Activated B cell treated with CpG ODN at 0.5 μM for 24 hours (primary cell): ENCODE measurements at regions of chr5 and their contacts with region 1.

Region 1: DNA sequence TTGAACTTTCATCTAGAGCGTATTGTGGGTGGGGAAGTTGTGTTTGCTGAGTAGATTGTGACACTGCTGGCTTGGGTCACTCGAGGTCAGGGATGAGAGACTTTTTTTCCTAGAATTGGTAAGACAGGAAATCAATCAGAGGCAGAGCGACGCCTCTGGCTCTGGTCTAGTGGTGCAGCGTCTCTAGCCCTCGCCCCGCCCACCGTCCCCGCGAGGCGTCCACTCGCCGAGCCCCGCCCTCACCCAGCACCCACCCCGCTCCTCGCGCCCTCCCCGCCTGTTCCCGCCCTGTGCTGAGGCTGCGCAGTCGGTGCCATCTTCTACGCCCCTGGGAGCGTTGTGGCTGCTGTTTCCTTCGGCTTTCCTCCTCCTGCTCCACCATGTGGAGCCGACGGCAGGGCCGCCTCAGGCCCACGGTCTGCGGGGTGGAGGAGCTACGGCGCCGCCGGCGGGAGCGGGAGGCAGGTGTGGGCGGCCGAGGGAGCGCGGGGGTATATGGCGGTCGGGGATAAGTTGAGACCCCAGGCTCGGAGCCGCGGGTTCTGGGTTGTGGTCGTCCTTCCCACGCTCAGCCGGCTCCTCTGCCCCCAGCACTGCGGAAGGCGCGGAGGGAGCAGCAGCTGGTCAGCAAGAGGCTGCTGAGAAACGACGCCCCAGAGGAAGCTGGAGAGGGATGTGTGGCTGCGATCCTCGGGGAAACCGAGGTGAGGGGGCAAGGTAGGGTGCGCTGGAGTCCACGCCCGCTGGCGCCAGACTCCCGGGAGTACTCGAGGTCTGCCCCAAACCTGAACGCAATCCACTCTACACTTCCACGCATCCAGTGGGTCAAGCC is at the start of gene TMCO6:
- DNase-seq: peak; percentile 91
- ATAC-seq: peak; percentile 99
- H3K4me3 Mint-ChIP-seq: peak within 1 kb of the TSS; percentile 92
- H3K27ac Mint-ChIP-seq: peak within 1 kb of the TSS; percentile 98
- H3K4me1 Mint-ChIP-seq: peaks cover 29% of the 10 kb centered on the region
- H3K27me3 Mint-ChIP-seq: no peaks in the 10 kb centered on the region
- CTCF ChIP-seq: no peak
- total RNA-seq, gene TMCO6: 20.1 and 23.3 TPM in 2 replicates

Region 2: GRCh38 chr5:140244525-140245025 is 394.8 kb before region 1 on chr5:
- CTCF ChIA-PET with region 1: no interaction called
- POLR2A ChIA-PET with region 1: no interaction called
- intact Hi-C with region 1: loop called (anchors 2 kb)
- DNase-seq: peak; percentile 60
- ATAC-seq: peak; percentile 74
- H3K4me3 Mint-ChIP-seq: no peak overlapping the region
- H3K27ac Mint-ChIP-seq: no peak overlapping the region
- H3K4me1 Mint-ChIP-seq: peaks cover 19% of the 10 kb centered on the region
- H3K27me3 Mint-ChIP-seq: no peaks in the 10 kb centered on the region
- CTCF ChIP-seq: peak; percentile 75

Region 3: GRCh38 chr5:140372971-140373487 is 266.3 kb before region 1 on chr5:
- CTCF ChIA-PET with region 1: interaction called, 11 read pairs
- POLR2A ChIA-PET with region 1: no interaction called
- intact Hi-C with region 1: loop called (anchors 1 kb)
- DNase-seq: no peak
- ATAC-seq: peak; percentile 70
- H3K4me3 Mint-ChIP-seq: no peak overlapping the region
- H3K27ac Mint-ChIP-seq: peak overlapping the region; percentile 18
- H3K4me1 Mint-ChIP-seq: peaks cover 7% of the 10 kb centered on the region
- H3K27me3 Mint-ChIP-seq: no peaks in the 10 kb centered on the region
- CTCF ChIP-seq: peak; percentile 80

Region 4: GRCh38 chr5:140557136-140557805 is 82.1 kb before region 1 on chr5 and contains the start of gene SRA1:
- CTCF ChIA-PET with region 1: no interaction called
- POLR2A ChIA-PET with region 1: no interaction called
- intact Hi-C with region 1: loop called (anchors 2 kb)
- DNase-seq: peak; percentile 88
- ATAC-seq: peak; percentile 97
- H3K4me3 Mint-ChIP-seq: peak within 1 kb of the TSS; percentile 93
- H3K27ac Mint-ChIP-seq: peak within 1 kb of the TSS; percentile 89
- H3K4me1 Mint-ChIP-seq: peaks cover 55% of the 10 kb centered on the region
- H3K27me3 Mint-ChIP-seq: no peaks in the 10 kb centered on the region
- CTCF ChIP-seq: no peak
- total RNA-seq, gene SRA1: 41.1 and 41.8 TPM in 2 replicates

Region 5: GRCh38 chr5:140664359-140665119 is 25.2 kb after region 1 on chr5 and contains the start of gene WDR55:
- CTCF ChIA-PET with region 1: interaction called, 3 read pairs
- POLR2A ChIA-PET with region 1: interaction called, 3 read pairs
- intact Hi-C with region 1: loop called (anchors 1 kb)
- DNase-seq: peak; percentile 91
- ATAC-seq: peak; percentile 98
- H3K4me3 Mint-ChIP-seq: peak within 1 kb of the TSS; percentile 97
- H3K27ac Mint-ChIP-seq: peak within 1 kb of the TSS; percentile 95
- H3K4me1 Mint-ChIP-seq: peaks cover 30% of the 10 kb centered on the region
- H3K27me3 Mint-ChIP-seq: no peaks in the 10 kb centered on the region
- CTCF ChIP-seq: no peak
- total RNA-seq, gene WDR55: 33.8 and 36.9 TPM in 2 replicates

Region 6: DNA sequence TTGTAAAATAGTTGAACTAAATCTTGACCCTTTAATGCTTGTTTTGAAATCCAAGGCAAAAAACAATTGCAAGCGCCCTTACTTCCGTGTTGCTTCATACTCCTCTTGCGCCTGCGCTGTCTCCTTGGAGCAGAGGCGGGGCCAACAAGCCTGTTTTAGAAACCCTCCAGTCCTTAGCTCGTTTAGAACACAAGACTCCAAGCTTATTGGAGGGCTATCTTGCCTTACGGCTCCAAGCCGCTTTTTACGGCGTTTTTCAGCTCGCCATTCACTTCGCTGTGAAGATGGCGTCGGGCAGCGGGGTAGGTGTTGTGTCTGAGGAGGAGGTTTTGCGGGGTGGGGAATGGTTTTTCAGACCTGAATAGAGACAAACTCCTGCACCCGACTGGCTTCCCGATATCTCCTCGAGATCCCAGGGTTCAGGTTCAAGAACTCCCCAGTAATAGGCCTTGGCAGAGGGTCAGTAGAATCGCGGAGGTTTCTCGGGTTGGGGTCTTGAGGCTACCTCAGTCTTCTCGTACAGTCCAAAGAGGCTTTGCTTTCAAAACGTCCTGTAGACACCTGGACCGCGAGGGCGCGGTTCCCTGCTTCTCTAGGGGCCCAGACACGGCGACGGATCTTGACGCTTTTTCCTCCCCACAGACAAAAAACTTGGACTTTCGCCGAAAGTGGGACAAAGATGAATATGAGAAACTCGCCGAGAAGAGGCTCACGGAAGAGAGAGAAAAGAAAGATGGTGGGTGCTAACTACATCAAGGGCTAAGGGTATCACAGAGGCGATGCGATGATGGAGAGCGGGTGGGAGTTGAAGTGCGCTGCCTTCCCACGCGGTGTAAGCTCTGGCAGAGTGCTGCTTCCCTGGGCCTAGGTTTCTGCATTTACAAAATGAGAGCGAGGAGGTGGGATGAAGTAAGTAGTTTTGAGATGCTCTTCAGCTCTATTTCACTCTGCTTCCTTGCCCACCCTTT is 61.1 kb after region 1 on chr5 and contains the start of gene ZMAT2:
- CTCF ChIA-PET with region 1: no interaction called
- POLR2A ChIA-PET with region 1: no interaction called
- intact Hi-C with region 1: loop called (anchors 2 kb)
- DNase-seq: peak; percentile 77
- ATAC-seq: peak; percentile 100
- H3K4me3 Mint-ChIP-seq: peak within 1 kb of the TSS; percentile 98
- H3K27ac Mint-ChIP-seq: peak within 1 kb of the TSS; percentile 92
- H3K4me1 Mint-ChIP-seq: peaks cover 25% of the 10 kb centered on the region
- H3K27me3 Mint-ChIP-seq: no peaks in the 10 kb centered on the region
- CTCF ChIP-seq: no peak
- total RNA-seq, gene ZMAT2: 67.8 and 70.2 TPM in 2 replicates